Psoas muscle (tissue), 8 donors: ENCODE measurements at regions of chr10 and their contacts with region 1.

Region 1: GRCh38 chr10:101897633-101898032 is 54.0 kb upstream of the KCNIP2 start:
- DNase-seq: no peak
- ATAC-seq: peak in 3 of 4 donors; percentile 32 to 53 (median 40)
- H3K4me3 ChIP-seq: no peak overlapping the region
- H3K27ac ChIP-seq: no peak overlapping the region
- H3K4me1 ChIP-seq: peaks cover 27% of the 10 kb centered on the region
- H3K27me3 ChIP-seq: no peaks in the 10 kb centered on the region
- CTCF ChIP-seq: no peak

Region 2: GRCh38 chr10:101938316-101939281 is 41.0 kb after region 1 on chr10:
- intact Hi-C with region 1: loop called in 1 of 2 experiments (anchors 5 kb)
- DNase-seq: no peak
- ATAC-seq: peak in 3 of 4 donors; percentile 54 to 62 (median 58)
- H3K4me3 ChIP-seq: peak overlapping the region; percentile 21
- H3K27ac ChIP-seq: peak overlapping the region; percentile 73
- H3K4me1 ChIP-seq: peaks cover 58% of the 10 kb centered on the region
- H3K27me3 ChIP-seq: no peaks in the 10 kb centered on the region
- CTCF ChIP-seq: no peak